ENCODE measurements at regions of chr3 and their contacts with region 1.

Region 1: GRCh38 chr3:57227204-57227929 is at the start of gene APPL1:
- DNase-seq: peak; percentile 92 to 99 (median 96)
- ATAC-seq: peak; percentile 98
- H3K4me3 ChIP-seq: peak within 1 kb of the TSS; percentile 67 to 79
- H3K27ac ChIP-seq: peak within 1 kb of the TSS; percentile 92 to 95
- H3K4me1 ChIP-seq: peaks cover 15 to 25% of the 10 kb centered on the region in 2 donors
- H3K27me3 ChIP-seq: no peaks in the 10 kb centered on the region
- CTCF ChIP-seq: no peak
- polyA plus RNA-seq, gene APPL1: 42.3 to 51.0 (median 43.9) TPM

Region 2: GRCh38 chr3:56997675-56998074 is 229.7 kb before region 1 on chr3:
- intact Hi-C with region 1: loop called in 1 of 2 experiments (anchors 10 kb)
- DNase-seq: no peak
- ATAC-seq: no peak
- H3K4me3 ChIP-seq: no peak overlapping the region
- H3K27ac ChIP-seq: no peak overlapping the region
- H3K4me1 ChIP-seq: no peaks in the 10 kb centered on the region
- H3K27me3 ChIP-seq: no peaks in the 10 kb centered on the region
- CTCF ChIP-seq: no peak

Region 3: DNA sequence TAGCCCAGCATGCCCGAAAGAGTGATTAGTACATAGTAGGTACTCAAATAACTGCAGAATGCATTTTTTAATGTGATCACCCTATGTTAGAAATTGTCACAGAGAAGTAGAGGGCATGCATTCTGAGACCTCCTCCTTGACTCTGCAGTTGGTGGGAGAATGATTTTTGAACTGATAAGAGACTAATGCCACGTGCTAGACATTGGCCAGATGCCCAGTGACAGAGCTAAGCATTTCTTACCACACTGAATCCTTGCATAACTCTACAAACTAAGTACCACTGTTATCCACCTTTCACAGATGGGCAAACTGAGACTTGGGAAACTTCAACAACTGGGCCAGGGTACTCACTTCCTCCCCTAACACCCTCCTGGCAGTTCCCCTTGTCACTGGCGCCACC is 200.4 kb before region 1 on chr3:
- intact Hi-C with region 1: no loop called
- DNase-seq: no peak
- ATAC-seq: no peak
- H3K4me3 ChIP-seq: no peak overlapping the region
- H3K27ac ChIP-seq: no peak overlapping the region
- H3K4me1 ChIP-seq: no peaks in the 10 kb centered on the region
- H3K27me3 ChIP-seq: no peaks in the 10 kb centered on the region
- CTCF ChIP-seq: no peak

Region 4: GRCh38 chr3:57094575-57094974 is 132.8 kb before region 1 on chr3:
- intact Hi-C with region 1: loop called in 1 of 2 experiments (anchors 10 kb)
- DNase-seq: peak in 2 of 4 donors; percentile 42 to 57
- ATAC-seq: no peak
- H3K4me3 ChIP-seq: no peak overlapping the region
- H3K27ac ChIP-seq: no peak overlapping the region
- H3K4me1 ChIP-seq: no peaks in the 10 kb centered on the region
- H3K27me3 ChIP-seq: no peaks in the 10 kb centered on the region
- CTCF ChIP-seq: no peak

Region 5: GRCh38 chr3:57164657-57165573 is 62.5 kb before region 1 on chr3 and contains the start of gene IL17RD:
- intact Hi-C with region 1: no loop called
- DNase-seq: peak; percentile 65 to 93 (median 79)
- ATAC-seq: peak; percentile 91
- H3K4me3 ChIP-seq: peak within 1 kb of the TSS; percentile 75 to 81
- H3K27ac ChIP-seq: no peak within 1 kb of the TSS
- H3K4me1 ChIP-seq: peaks cover 0 to 17% of the 10 kb centered on the region in 2 donors
- H3K27me3 ChIP-seq: peaks cover 0 to 97% of the 10 kb centered on the region in 2 donors
- CTCF ChIP-seq: no peak
- polyA plus RNA-seq, gene IL17RD: 10.3 to 14.3 (median 11.9) TPM

Region 6: DNA sequence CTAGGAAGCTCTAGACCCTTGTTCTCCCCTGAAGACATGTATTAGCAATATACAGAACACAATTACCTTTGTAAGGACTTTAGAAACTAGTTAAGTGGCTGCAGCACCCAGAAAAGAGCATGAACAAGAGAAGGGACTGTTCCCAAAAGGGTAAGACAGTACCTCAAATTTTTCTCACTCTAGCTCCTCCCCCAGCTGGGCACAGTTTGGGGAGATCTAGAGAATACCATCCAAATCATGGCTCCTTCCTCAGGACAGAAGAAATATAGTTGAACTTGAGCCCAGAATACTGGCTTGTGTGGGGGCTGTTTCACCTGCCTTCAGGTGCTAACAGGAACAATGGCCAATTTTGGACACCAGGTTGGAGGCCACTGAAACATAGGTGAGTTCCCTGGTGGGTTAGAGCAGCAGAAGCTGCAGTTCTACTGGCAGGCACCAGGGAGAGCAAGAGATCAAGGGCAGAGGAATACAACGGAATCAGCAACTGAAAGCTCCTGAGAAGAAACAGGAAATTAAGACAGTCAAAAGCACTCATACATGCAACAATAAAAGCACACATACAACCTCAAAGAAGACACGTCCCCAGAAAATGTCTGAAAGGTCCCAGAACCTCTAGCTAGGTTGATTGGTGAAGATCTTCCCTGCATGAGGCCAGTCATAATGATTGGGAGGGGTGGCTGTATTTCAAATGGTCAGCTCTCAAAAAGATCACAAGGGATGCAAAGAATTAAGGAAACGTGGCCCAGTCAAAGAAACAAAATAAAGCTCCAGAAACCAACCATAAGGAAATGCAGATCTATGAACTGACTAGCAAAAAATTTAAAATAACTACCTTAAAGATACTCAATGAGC is 170.0 kb after region 1 on chr3:
- intact Hi-C with region 1: no loop called
- DNase-seq: peak in 2 of 4 donors; percentile 2 to 35
- ATAC-seq: peak; percentile 99
- H3K4me3 ChIP-seq: no peak overlapping the region
- H3K27ac ChIP-seq: no peak overlapping the region
- H3K4me1 ChIP-seq: no peaks in the 10 kb centered on the region
- H3K27me3 ChIP-seq: no peaks in the 10 kb centered on the region
- CTCF ChIP-seq: peak; percentile 74

Region 7: DNA sequence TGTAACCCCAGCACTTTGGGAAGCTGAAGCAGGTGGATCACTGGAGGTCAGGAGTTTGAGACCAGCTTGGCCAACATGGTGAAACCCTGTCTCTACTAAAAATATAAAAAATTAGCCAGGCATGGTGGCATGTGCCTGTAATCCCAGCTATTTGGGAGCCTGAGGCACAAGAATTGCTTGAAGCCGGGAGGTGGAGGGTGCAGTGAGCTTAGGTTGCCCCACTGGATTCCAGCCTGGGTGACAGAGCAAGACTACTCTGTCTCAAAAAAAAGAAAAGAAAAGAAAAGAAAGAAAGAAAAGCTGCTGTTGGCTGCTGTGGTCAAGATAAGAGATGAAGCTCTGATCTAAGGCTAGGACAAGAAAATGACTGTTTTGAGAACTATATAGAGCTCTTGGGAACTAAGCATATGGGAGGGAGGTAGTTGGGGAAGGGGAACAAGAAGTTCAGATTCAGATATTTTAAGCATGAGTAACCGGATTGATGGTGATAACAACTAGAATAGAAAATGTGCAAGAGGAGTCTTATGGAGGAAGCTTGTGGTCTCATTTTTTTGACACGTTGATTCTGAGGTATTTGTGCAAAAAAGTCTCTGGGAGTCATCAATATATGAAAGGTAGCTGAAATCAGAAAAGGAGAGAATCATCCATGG is 291.0 kb after region 1 on chr3:
- intact Hi-C with region 1: no loop called
- DNase-seq: no peak
- ATAC-seq: no peak
- H3K4me3 ChIP-seq: no peak overlapping the region
- H3K27ac ChIP-seq: no peak overlapping the region
- H3K4me1 ChIP-seq: no peaks in the 10 kb centered on the region
- H3K27me3 ChIP-seq: no peaks in the 10 kb centered on the region
- CTCF ChIP-seq: no peak

Measured in left lung (tissue), 14 donors.